H1 (cell line): ENCODE measurements at regions of chr17 and their contacts with region 1.

Region 1: DNA sequence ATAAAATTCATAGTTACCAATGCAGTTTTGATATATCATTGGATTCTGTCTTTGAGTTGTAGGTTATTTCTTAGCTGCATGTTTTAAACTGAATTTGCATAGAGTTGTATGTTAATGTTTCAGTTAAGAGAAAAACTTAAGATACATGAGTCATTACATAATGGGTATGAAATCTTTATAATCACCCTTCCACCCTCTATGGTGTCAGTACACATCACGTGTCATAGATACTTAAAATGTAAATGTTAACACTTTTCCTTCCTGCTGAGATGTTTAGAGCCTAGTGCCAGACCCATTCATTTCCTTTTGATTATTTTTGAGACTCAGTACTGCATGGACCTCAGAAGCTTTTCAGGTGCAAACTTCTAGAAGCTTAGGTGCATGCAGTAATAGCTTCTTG is 20.5 kb downstream of the ZNF207 start:
- DNase-seq: no peak
- H3K4me3 ChIP-seq: no peak overlapping the region
- H3K27ac ChIP-seq: no peak overlapping the region
- H3K4me1 ChIP-seq: no peaks in the 10 kb centered on the region
- H3K27me3 ChIP-seq: no peaks in the 10 kb centered on the region
- CTCF ChIP-seq: no peak
- EP300 ChIP-seq: no peak
- POLR2A ChIP-seq: no peak
- RAD21 ChIP-seq: no peak

Region 2: DNA sequence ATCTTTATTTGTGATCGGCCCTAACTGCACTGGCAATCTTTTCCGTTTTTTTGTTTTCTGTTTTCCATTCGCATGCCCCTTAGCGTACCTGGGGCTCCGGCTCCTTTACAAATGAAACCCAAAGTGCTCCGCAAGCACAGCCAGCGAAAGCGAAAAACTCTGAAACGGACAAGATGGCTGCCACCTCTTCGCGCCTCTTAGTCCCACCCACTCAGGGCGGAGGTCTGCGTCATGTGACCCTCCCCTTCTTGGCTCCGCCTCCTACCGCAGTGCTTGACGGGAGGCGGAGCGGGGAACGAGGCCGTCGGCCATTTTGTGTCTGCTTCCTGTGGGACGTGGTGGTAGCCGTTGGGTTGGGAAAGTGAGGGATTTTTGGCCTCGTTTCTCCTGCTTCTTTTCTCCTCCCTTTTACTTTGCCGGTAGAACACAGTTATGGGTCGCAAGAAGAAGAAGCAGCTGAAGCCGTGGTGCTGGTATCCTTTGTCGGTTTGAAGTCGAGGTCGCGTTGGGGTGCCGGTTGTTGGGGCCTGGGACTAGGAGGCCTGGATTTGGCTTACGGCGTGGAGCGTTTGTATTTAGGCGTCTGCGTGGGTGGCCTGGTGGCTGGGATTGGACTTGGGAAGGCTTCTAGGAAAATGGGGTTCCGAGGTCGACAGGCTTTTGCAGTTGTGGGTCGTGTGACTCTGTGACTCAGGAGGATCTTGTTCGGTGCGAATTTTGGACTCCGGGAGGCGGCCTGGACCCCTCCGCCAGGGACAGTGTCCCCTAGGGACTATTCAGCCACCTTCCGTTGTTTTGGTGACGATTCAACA is 20.4 kb before region 1 on chr17 and contains the start of gene ZNF207:
- CTCF ChIA-PET with region 1: interaction called, 3 read pairs
- POLR2A ChIA-PET with region 1: interaction called, 65 read pairs
- DNase-seq: peak; percentile 88 to 92
- H3K4me3 ChIP-seq: peak within 1 kb of the TSS; percentile 85 to 100 (median 95)
- H3K27ac ChIP-seq: peak within 1 kb of the TSS; percentile 97
- H3K4me1 ChIP-seq: no peaks in the 10 kb centered on the region; a peak in 1 of 7 replicates
- H3K27me3 ChIP-seq: no peaks in the 10 kb centered on the region
- CTCF ChIP-seq: no peak; a peak in 1 of 4 replicates
- EP300 ChIP-seq: no peak
- POLR2A ChIP-seq: peak; percentile 94 to 97
- RAD21 ChIP-seq: no peak
- total RNA-seq, gene ZNF207: 254 and 268 TPM in 2 replicates

Region 3: GRCh38 chr17:32355649-32356377 is 14.6 kb before region 1 on chr17:
- CTCF ChIA-PET with region 1: interaction called, 3 read pairs
- POLR2A ChIA-PET with region 1: interaction called, 65 read pairs
- DNase-seq: no peak
- H3K4me3 ChIP-seq: no peak overlapping the region
- H3K27ac ChIP-seq: no peak overlapping the region
- H3K4me1 ChIP-seq: no peaks in the 10 kb centered on the region; a peak in 1 of 7 replicates
- H3K27me3 ChIP-seq: no peaks in the 10 kb centered on the region
- CTCF ChIP-seq: no peak
- EP300 ChIP-seq: no peak
- POLR2A ChIP-seq: 0 out of 3 replicates have a peak, but pooled peaks of 1 of the 2 experiments have one; percentile 16
- RAD21 ChIP-seq: no peak

Region 4: DNA sequence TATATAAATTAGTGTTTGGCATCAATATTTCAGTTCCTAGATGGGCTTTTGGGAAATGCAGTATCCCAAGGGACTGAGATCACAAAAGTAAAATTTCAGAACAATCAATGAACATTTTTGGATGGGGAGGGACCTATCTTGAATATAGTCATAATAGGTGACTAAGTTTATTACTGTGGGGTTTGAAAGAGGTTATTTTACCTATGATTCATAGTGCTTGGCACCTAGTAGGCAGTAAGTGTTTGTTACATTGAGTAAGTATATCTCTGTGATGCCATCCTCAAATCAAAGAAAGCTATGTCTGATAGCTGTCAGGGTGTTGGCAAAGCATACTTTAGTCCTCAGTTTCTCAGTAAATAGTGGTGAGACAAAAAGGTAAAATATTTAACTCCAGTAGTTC is 16.4 kb after region 1 on chr17:
- CTCF ChIA-PET with region 1: no interaction called
- POLR2A ChIA-PET with region 1: interaction called, 17 read pairs
- DNase-seq: no peak
- H3K4me3 ChIP-seq: no peak overlapping the region
- H3K27ac ChIP-seq: no peak overlapping the region
- H3K4me1 ChIP-seq: no peaks in the 10 kb centered on the region
- H3K27me3 ChIP-seq: no peaks in the 10 kb centered on the region
- CTCF ChIP-seq: no peak
- EP300 ChIP-seq: no peak
- POLR2A ChIP-seq: no peak
- RAD21 ChIP-seq: no peak

Region 5: GRCh38 chr17:32461853-32462617 is 91.6 kb after region 1 on chr17:
- CTCF ChIA-PET with region 1: interaction called, 10 read pairs
- POLR2A ChIA-PET with region 1: no interaction called
- DNase-seq: peak in 1 of 2 experiments; percentile 78
- H3K4me3 ChIP-seq: no peak overlapping the region
- H3K27ac ChIP-seq: no peak overlapping the region
- H3K4me1 ChIP-seq: no peaks in the 10 kb centered on the region
- H3K27me3 ChIP-seq: no peaks in the 10 kb centered on the region
- CTCF ChIP-seq: peak in 2 of 3 experiments; percentile 51 to 59; a peak in 2 of 4 replicates
- EP300 ChIP-seq: no peak
- POLR2A ChIP-seq: no peak
- RAD21 ChIP-seq: peak in 1 of 2 experiments; percentile 20; a peak in 1 of 4 replicates

Region 6: GRCh38 chr17:32609085-32609484 is 238.7 kb after region 1 on chr17:
- CTCF ChIA-PET with region 1: no interaction called
- POLR2A ChIA-PET with region 1: no interaction called
- DNase-seq: no peak
- H3K4me3 ChIP-seq: no peak overlapping the region
- H3K27ac ChIP-seq: no peak overlapping the region
- H3K4me1 ChIP-seq: no peaks in the 10 kb centered on the region
- H3K27me3 ChIP-seq: no peaks in the 10 kb centered on the region
- CTCF ChIP-seq: peak; percentile 39 to 49 (median 46)
- EP300 ChIP-seq: no peak
- POLR2A ChIP-seq: no peak
- RAD21 ChIP-seq: peak in 1 of 2 experiments; percentile 50; a peak in 2 of 4 replicates